Endothelial cell of umbilical vein (primary cell): ENCODE measurements at regions of chr14 and their contacts with region 1.

Region 1: GRCh38 chr14:93115069-93115820 is 480 bp downstream of the ITPK1 start:
- DNase-seq: peak; percentile 83
- H3K4me3 ChIP-seq: peak overlapping the region; percentile 43 to 62 (median 59)
- H3K27ac ChIP-seq: no peak overlapping the region
- H3K4me1 ChIP-seq: peaks cover 12% of the 10 kb centered on the region
- H3K27me3 ChIP-seq: no peaks in the 10 kb centered on the region
- CTCF ChIP-seq: no peak
- POLR2A ChIP-seq: no peak

Region 2: DNA sequence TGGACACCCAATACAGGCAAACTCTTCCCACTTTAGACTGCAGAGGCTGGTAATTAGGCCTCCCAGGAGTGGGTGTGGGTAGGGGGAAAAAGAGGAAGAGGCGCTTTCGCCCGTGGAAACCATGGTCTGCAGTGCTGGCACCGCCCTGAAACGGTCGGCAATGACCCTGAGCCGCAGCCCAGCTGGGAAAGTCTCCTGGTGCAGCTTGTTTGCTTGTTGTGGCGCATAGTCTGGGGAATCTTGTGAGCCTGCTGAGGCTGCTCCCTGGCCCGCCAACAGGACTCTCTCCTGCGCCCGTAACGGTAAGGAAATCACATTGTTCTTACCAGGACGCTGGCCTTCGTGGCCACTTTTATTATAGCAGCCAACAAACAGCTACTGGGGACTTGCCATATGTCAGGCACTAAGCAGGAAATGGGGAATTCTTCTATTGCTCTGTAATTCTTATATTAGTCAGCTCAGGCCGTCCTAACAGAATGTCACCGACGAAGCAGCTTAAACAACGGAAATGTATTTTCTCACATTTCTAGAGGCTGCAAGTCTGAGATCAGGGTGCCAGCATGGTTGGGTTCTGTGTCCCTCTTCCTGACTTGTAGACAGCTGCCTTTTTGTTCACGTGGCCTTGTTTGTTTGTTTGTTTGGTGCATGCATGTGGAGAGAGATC is 654.2 kb before region 1 on chr14:
- CTCF ChIA-PET with region 1: no interaction called
- POLR2A ChIA-PET with region 1: no interaction called
- dilution Hi-C with region 1: no loop called
- intact Hi-C with region 1: no loop called
- DNase-seq: peak; percentile 95
- H3K4me3 ChIP-seq: no peak overlapping the region
- H3K27ac ChIP-seq: peak overlapping the region; percentile 86
- H3K4me1 ChIP-seq: peaks cover 30% of the 10 kb centered on the region
- H3K27me3 ChIP-seq: no peaks in the 10 kb centered on the region
- CTCF ChIP-seq: peak in 1 of 2 donors; percentile 3
- POLR2A ChIP-seq: no peak

Region 3: DNA sequence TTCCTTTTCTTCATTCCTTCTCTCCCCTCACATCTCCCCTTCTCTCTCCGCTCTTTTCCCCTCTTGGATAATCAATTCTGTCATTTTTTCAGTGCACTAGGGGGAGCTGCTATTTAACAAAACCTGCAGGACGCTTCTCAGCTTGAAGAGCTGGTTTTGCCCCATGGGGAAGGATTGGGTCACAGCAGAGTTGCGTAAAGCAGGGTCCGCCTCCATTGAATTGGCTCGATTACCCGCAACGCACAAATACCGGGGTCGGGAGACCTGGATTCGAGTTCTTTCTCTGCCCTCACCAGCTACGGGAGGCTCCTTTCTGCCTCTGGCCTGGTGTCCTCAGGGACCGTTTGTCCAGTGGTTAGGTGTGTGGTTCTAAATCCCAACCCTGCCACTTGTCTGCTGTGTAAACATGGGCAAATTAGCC is 234.4 kb before region 1 on chr14:
- CTCF ChIA-PET with region 1: interaction called, 11 read pairs
- POLR2A ChIA-PET with region 1: no interaction called
- dilution Hi-C with region 1: no loop called
- intact Hi-C with region 1: no loop called
- DNase-seq: peak; percentile 20
- H3K4me3 ChIP-seq: no peak overlapping the region
- H3K27ac ChIP-seq: no peak overlapping the region
- H3K4me1 ChIP-seq: no peaks in the 10 kb centered on the region
- H3K27me3 ChIP-seq: peaks cover 0 to 6% of the 10 kb centered on the region in 2 experiments
- CTCF ChIP-seq: peak in 1 of 2 donors; percentile 10
- POLR2A ChIP-seq: no peak

Region 4: DNA sequence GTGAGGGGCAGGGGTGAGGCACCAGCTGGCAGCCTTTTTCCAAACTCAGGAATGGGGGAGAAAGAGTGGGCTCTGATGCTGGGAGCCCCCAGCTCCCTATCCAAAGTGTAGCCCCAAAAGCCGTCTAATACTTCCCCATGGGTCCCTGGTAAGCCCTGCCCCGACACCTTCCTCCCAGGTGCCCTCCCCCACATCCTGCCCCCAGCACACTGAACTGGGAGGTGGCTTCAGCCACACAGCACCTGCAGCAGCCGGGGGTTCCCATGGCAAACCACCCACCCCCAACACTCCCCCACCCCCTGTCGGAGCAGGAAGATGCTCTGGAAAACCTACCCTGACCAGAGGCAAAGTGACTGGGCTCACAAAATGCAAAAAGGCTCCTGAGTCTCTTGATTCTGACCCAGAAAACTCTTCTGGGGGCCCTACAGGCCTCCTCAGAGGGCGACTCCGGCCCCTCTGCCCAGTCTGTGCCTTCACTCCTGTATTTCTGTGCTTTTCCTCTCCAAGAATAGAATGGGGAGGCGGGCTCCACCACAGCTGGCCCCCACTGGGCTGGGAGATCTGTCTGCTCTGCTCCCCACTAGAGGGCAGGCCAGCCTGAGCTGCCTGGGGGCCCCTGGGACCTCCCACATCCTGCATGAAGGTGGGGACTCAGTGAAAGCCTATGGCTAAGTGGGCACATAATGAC is 81.1 kb before region 1 on chr14:
- CTCF ChIA-PET with region 1: interaction called, 27 read pairs
- POLR2A ChIA-PET with region 1: no interaction called
- dilution Hi-C with region 1: no loop called
- intact Hi-C with region 1: loop called (anchors 1 kb)
- DNase-seq: no peak
- H3K4me3 ChIP-seq: no peak overlapping the region
- H3K27ac ChIP-seq: no peak overlapping the region
- H3K4me1 ChIP-seq: peaks cover 17% of the 10 kb centered on the region
- H3K27me3 ChIP-seq: no peaks in the 10 kb centered on the region
- CTCF ChIP-seq: peak; percentile 36 to 60
- POLR2A ChIP-seq: no peak

Region 5: DNA sequence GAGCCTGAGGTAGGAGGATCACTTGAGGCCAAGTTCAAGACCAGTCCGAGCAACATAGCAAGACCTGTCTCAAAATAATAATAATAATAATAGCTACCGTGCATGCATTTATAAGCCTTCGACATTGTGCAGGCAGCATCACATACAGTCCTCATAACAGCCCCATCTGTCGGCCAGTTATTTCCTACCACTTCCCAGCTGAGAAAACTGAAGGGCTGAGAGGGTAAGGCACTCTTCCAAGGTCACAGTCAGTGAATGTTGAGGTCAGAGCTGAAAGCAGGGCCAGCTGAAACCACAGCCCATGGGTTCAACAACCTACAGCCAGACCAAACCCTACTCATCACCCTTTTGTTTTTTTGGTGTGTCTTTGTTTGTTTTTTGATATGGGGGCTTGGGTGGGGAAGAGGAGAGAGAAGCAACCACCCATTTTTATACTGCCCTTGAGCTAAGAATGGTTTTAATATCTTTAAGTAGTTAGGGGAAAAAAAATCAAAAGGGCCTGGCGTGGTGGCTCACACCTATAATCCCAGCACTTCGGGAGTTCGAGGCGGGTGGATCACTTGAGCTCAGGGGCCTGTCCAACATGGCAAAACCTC is 17.3 kb after region 1 on chr14:
- CTCF ChIA-PET with region 1: interaction called, 121 read pairs
- POLR2A ChIA-PET with region 1: no interaction called
- dilution Hi-C with region 1: no loop called
- intact Hi-C with region 1: no loop called
- DNase-seq: peak; percentile 52
- H3K4me3 ChIP-seq: no peak overlapping the region
- H3K27ac ChIP-seq: no peak overlapping the region
- H3K4me1 ChIP-seq: no peaks in the 10 kb centered on the region
- H3K27me3 ChIP-seq: no peaks in the 10 kb centered on the region
- CTCF ChIP-seq: peak; percentile 30 to 65
- POLR2A ChIP-seq: no peak

Region 6: GRCh38 chr14:93184388-93185353 is 69.4 kb after region 1 on chr14 and contains the starts of genes LYSET and MOAP1:
- CTCF ChIA-PET with region 1: interaction called, 10 read pairs
- POLR2A ChIA-PET with region 1: interaction called, 4 read pairs
- dilution Hi-C with region 1: no loop called
- intact Hi-C with region 1: no loop called
- DNase-seq: peak; percentile 88
- H3K4me3 ChIP-seq: peak within 1 kb of the TSS; percentile 58 to 98 (median 96)
- H3K27ac ChIP-seq: peak within 1 kb of the TSS; percentile 98
- H3K4me1 ChIP-seq: peaks cover 21% of the 10 kb centered on the region
- H3K27me3 ChIP-seq: no peaks in the 10 kb centered on the region
- CTCF ChIP-seq: peak in 1 of 2 donors; percentile 27
- POLR2A ChIP-seq: peak; percentile 91
- total RNA-seq, gene LYSET: 18.4 and 18.8 TPM in 2 replicates
- total RNA-seq, gene MOAP1: 15.0 and 16.6 TPM in 2 replicates

Region 7: DNA sequence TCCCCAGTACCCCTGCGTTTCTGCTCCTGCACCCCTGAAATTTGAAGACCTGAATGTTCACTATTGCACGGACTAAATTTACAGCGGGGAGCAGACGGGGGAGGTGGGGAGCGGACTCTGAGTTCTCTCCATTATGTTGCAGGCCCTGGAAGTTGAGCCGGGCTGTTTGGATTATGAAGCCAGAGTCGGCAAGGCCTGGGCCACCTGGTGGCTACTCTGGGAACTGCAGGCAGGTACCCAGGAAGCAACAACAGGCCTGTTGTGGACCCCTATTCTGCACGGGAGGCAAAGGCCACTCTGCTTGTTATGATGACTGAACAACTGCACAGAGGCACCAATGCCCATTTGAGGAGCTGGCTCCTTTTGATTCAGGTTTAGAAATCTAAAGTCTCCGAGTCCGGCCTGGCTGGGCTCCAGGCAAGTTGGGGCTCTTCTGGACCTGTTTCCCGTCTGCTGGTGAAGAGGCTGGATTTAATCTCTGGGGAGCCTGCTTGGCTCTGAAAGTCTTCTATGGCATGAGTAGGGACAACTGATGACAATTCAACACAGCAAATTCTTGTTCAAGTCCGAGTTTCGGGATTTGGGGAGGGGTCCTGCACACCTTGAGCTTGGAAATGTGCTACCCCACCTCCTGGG is 777.8 kb after region 1 on chr14:
- CTCF ChIA-PET with region 1: interaction called, 3 read pairs
- POLR2A ChIA-PET with region 1: no interaction called
- dilution Hi-C with region 1: no loop called
- intact Hi-C with region 1: loop called (anchors 5 kb)
- DNase-seq: peak; percentile 38
- H3K4me3 ChIP-seq: no peak overlapping the region
- H3K27ac ChIP-seq: no peak overlapping the region
- H3K4me1 ChIP-seq: no peaks in the 10 kb centered on the region
- H3K27me3 ChIP-seq: no peaks in the 10 kb centered on the region
- CTCF ChIP-seq: peak; percentile 89 to 96
- POLR2A ChIP-seq: no peak